ENCODE measurements at regions of chr22 and their contacts with region 1.

Region 1: GRCh38 chr22:41621099-41621910 is at the start of gene XRCC6:
- DNase-seq: peak; percentile 97
- H3K4me3 Mint-ChIP-seq: peak within 1 kb of the TSS; percentile 93
- H3K27ac Mint-ChIP-seq: peak within 1 kb of the TSS; percentile 94
- H3K4me1 Mint-ChIP-seq: peaks cover 50% of the 10 kb centered on the region
- H3K27me3 Mint-ChIP-seq: no peaks in the 10 kb centered on the region
- total RNA-seq, gene XRCC6: 367 and 368 TPM in 2 replicates

Region 2: DNA sequence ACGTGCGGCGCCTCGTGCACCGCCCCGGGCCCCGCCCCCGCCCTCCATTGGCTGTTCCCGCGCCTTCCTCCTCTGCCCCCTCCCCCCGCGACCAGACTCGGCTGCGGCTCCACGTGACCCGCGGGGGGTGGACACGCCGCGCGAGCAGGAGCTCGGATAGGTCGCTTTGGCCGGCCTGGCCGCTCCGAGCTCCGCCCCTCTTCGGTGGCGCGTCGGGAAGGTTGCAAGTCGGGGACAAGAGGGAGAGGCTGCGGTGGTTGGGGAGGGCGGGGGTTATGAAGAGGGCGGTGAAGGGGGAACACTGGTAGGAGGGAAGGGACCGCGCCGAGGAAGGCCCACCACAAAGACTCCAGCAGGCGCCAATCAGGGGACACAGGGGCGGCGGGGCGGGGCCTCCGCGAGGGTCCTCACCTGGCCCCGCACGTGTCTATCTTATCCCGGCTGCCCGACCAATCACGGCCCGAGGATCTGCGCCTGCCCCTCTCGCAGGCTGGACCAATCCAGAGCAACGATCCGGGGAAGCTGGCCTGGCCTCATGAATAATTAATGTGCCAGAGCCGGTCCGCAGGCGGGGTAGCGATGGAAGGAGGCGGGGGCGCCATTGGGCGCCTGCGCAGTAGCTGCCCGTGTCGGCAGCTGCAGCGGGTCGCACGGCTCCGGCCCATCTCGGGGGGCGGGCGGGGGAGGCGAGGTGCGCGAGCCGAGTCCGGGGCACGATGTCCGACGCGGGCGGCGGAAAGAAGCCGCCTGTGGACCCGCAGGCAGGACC is 239.8 kb before region 1 on chr22 and contains the start of gene TEF:
- intact Hi-C with region 1: loop called (anchors 1 kb)
- DNase-seq: peak; percentile 97
- H3K4me3 Mint-ChIP-seq: peak within 1 kb of the TSS; percentile 85
- H3K27ac Mint-ChIP-seq: peak within 1 kb of the TSS; percentile 93
- H3K4me1 Mint-ChIP-seq: peaks cover 6% of the 10 kb centered on the region
- H3K27me3 Mint-ChIP-seq: no peaks in the 10 kb centered on the region
- total RNA-seq, gene TEF: 1.6 and 2.1 TPM in 2 replicates

Region 3: DNA sequence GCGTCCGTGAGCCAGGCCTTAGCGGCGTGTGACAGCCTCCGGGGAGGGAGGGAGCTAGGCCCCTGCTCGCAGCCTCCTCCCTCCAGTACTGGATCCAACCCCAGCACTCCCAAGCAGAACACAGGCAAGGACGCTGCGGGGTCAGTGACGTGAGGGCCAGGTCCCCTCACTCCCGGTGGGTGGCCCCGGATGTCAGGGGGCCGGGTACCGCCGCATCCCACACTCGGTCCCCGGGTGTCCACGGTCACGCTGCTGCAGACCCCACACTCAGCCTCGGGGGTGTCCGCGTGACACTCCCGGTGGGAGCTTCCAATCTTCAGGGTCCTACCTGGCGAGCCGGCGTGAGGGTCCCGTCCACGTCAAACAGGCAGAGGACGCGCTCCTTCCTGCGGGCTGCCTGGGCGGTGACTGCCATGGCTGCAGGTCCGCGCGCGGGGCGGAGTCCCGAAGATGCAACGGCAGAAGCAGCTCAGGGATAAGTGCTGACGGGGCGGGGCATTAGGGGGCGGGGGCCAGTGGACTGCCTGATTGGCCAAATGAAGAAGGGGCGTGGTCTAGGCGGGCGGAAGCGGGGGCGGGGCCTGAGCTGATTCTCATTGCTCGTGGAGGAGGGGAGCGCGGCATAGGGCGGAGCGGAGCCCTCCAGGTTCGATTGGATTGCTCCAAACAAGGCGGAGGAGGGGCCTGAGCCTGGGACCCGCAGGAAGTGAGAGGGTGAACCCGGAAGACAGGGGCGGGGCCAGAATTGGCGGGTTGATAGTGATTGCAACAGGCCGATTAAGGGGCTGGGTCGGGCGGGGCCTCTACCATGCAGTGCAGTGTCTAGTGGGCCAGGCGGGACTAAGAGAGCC is 31.7 kb before region 1 on chr22 and contains the start of gene PMM1:
- intact Hi-C with region 1: loop called (anchors 1 kb)
- DNase-seq: peak; percentile 100
- H3K4me3 Mint-ChIP-seq: peak within 1 kb of the TSS; percentile 92
- H3K27ac Mint-ChIP-seq: peak within 1 kb of the TSS; percentile 82
- H3K4me1 Mint-ChIP-seq: peaks cover 17% of the 10 kb centered on the region
- H3K27me3 Mint-ChIP-seq: no peaks in the 10 kb centered on the region
- total RNA-seq, gene PMM1: 21.4 and 22.6 TPM in 2 replicates

Region 4: GRCh38 chr22:41636467-41636866 is 15.2 kb after region 1 on chr22:
- intact Hi-C with region 1: no loop called
- DNase-seq: no peak
- H3K4me3 Mint-ChIP-seq: no peak overlapping the region
- H3K27ac Mint-ChIP-seq: no peak overlapping the region
- H3K4me1 Mint-ChIP-seq: peaks cover 7% of the 10 kb centered on the region
- H3K27me3 Mint-ChIP-seq: no peaks in the 10 kb centered on the region

Region 5: GRCh38 chr22:41682033-41682807 is 60.9 kb after region 1 on chr22:
- intact Hi-C with region 1: loop called (anchors 1 kb)
- DNase-seq: peak; percentile 79
- H3K4me3 Mint-ChIP-seq: peak overlapping the region; percentile 100
- H3K27ac Mint-ChIP-seq: peak overlapping the region; percentile 97
- H3K4me1 Mint-ChIP-seq: peaks cover 18% of the 10 kb centered on the region
- H3K27me3 Mint-ChIP-seq: no peaks in the 10 kb centered on the region

Region 6: DNA sequence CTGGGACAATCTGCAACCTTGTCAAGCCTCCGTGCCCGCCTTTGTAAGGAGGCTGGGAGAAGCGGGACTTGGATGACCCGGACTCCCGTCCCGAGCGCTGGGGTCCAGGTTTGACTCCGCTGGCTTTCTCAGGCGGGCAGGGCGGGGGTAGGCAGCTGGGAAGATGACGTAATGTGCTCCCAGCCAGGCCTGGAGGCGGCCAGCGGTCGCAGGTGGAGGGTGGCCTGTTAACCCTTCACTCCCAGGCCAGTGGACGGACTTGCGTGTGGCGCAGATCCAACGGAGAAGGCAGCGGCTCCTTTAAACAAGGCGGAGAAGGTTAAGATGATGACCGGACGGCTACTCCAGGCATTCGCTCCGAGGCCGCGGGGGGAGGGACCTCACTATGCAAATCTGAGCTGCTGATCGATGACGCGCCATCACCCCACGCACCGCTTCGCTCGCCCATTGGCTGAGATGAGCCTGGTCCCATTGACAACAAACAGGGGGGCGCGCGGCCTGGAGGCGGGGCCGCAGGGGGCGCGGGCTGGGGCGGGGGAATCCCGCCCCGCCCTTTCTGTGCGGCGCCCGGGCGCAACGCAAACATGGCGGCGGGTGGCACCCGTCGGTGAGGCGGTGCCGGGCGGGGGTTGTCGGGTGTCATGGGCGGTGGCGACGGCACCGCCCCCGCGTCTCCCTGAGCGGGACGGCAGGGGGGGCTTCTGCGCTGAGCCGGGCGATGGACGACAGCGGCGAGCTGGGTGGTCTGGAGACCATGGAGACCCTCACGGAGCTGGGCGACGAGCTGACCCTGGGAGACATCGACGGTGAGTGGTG is 211.5 kb after region 1 on chr22 and contains the start of gene SREBF2:
- intact Hi-C with region 1: loop called (anchors 2 kb)
- DNase-seq: peak; percentile 99
- H3K4me3 Mint-ChIP-seq: peak within 1 kb of the TSS; percentile 96
- H3K27ac Mint-ChIP-seq: peak within 1 kb of the TSS; percentile 98
- H3K4me1 Mint-ChIP-seq: peaks cover 51% of the 10 kb centered on the region
- H3K27me3 Mint-ChIP-seq: peaks cover 2% of the 10 kb centered on the region
- total RNA-seq, gene SREBF2: 235 and 245 TPM in 2 replicates

Measured in activated T-helper 1 cell treated with anti-CD3 and anti-CD28 coated beads, Interleukin-12 subunit alpha, Interleukin-12 subunit beta, Interleukin-2, Interleukin-4 antibody, amounts not matched to agents 30 ng/mL and 10 ng/mL and 1 ng/mL, durations not matched to agents 14 hours and 24 hours and 36 hours (primary cell).